Colonic mucosa (tissue), 4 donors: ENCODE measurements at regions of chr7 and their contacts with region 1.

Region 1: GRCh38 chr7:33757562-33758165 is 147.7 kb upstream of the BMPER start:
- DNase-seq: peak; percentile 42
- H3K4me3 ChIP-seq: no peak overlapping the region
- H3K27ac ChIP-seq: no peak overlapping the region
- H3K4me1 ChIP-seq: peaks cover 4% of the 10 kb centered on the region
- H3K27me3 ChIP-seq: no peaks in the 10 kb centered on the region
- CTCF ChIP-seq: no peak

Region 2: DNA sequence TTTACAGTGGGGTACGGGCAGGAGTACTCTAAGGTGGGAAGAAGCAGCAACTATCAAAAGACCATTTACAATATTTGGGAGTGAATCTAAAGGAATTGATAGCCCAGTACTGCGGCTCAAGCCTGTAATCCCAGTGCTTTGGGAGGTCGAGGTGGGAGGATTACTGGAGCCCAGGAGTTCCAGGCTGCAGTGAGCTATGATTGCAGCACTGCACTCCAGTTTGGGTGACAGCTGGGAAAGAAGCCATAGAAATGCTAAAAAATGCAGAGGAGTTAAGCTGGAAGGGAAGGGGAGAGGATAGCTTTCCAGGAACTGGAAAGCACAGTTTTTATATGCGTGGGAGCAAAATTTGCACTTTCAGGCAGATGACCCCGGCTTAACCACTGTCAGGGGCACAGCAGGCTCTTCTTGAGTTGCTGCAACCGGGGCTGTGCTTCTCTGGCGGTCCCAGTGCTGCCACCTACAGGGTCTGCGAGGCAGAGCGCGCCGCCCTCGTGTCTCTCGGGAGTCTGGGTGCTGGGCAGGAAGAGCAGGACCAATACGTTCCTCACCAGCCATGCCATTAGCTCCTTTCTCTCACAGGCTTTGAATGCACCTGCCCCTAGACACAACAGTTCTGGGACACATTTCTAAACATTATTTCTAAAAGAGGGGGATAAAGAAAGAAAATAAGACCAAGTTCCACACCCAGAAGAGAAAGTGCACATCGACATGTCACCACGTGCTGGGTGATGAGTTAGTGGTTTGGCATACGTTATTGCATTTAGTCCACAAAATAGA is 137.6 kb after region 1 on chr7:
- intact Hi-C with region 1: loop called (anchors 5 kb)
- DNase-seq: peak; percentile 87
- H3K4me3 ChIP-seq: no peak overlapping the region
- H3K27ac ChIP-seq: no peak overlapping the region
- H3K4me1 ChIP-seq: no peaks in the 10 kb centered on the region
- H3K27me3 ChIP-seq: no peaks in the 10 kb centered on the region
- CTCF ChIP-seq: peak; percentile 92

Region 3: DNA sequence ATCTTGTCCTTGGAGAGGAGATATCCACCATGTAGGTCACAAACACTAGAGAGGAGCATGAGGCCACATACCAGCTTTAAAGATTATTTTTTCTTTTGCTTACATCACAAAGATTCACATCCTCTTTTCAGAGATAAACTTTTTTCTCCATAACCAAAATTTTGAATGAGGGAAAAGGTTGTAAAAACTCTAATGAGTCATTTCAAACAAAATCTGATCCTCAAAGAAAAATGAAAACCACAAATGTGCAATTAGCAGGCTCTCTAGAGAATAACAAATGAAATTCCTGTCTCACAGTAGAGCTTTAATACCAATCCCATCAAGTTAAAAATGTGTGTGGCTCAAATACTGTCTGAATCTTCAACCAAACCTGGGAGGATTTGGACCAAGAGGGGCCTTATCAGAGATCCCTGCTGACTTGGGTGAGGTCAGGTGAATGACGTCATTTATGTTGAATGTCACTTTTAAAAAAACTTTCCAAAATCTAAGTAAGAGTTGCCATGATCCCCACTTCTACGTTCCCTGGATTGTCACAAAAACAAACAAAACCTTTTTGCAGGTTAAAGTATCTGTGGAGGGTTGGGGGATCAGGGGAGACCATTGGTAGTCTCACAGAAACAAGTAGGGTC is 638.9 kb after region 1 on chr7:
- intact Hi-C with region 1: no loop called
- DNase-seq: no peak
- H3K4me3 ChIP-seq: no peak overlapping the region
- H3K27ac ChIP-seq: no peak overlapping the region
- H3K4me1 ChIP-seq: no peaks in the 10 kb centered on the region
- H3K27me3 ChIP-seq: no peaks in the 10 kb centered on the region
- CTCF ChIP-seq: no peak